GM12878 (cell line): ENCODE measurements at regions of chr3 and their contacts with region 1.

Region 1: DNA sequence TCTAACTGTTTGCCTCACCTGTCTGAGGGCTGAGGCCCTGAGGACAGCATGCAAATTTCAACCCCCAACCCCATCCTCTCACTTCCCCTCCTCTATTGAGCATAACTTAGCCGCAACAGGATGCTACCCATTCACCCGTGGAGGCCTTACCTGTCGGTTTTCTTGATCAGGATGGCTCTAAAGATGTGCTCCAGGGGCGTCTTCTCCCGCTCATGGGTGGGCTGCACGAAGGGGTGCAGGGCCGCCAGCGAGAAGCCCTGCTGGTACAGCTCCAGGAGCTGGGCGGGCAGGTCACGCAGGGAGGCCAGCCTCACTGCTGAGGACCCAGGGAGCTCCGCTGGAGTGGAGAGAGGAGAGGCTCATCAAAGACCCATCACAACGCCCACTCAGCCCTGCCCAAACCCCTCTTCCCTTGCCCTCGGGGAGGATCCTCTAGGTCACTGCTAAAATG is 79.8 kb downstream of the RFTN1 start:
- DNase-seq: peak; percentile 74
- ATAC-seq: peak; percentile 89
- H3K4me3 ChIP-seq: no peak overlapping the region; the same call in 1 of the 2 replicates
- H3K27ac ChIP-seq: peak overlapping the region; percentile 59
- H3K4me1 ChIP-seq: peaks cover 39% of the 10 kb centered on the region
- H3K27me3 ChIP-seq: no peaks in the 10 kb centered on the region
- CTCF ChIP-seq: no peak
- EP300 ChIP-seq: peak; percentile 80 to 95
- POLR2A ChIP-seq: no peak
- RAD21 ChIP-seq: no peak; the same call in 1 of the 2 replicates

Region 2: DNA sequence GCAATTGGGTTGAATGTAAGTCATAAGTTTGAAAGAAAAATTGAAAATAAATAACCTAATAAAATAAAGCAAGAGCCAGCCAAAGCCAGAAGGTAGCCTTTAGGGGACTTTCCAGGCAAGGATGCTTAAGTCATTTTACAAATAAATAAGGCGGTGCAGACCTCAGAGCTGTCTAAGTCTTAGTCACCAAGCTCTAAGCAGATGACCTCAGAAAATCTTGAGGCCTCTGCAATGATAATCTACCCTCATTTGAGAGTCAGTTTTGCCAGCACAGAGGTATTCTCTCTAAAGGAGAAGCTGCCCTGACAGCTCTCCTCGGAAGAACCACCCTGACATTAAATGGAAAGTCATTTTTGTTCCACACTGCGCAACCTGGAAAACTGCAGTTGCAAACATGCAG is 54.8 kb before region 1 on chr3:
- CTCF ChIA-PET with region 1: interaction called, 3 read pairs
- POLR2A ChIA-PET with region 1: interaction called, 9 read pairs
- RAD21 ChIA-PET with region 1: interaction called, 19 read pairs
- SMC1A ChIA-PET with region 1: interaction called, 20 read pairs
- in situ Hi-C with region 1: no loop called
- intact Hi-C with region 1: no loop called
- DNase-seq: no peak
- ATAC-seq: peak; percentile 70
- H3K4me3 ChIP-seq: no peak overlapping the region
- H3K27ac ChIP-seq: peak overlapping the region; percentile 88
- H3K4me1 ChIP-seq: peaks cover 93% of the 10 kb centered on the region
- H3K27me3 ChIP-seq: no peaks in the 10 kb centered on the region
- CTCF ChIP-seq: no peak
- EP300 ChIP-seq: peak in 1 of 2 experiments; percentile 82; a peak in 2 of 4 replicates
- POLR2A ChIP-seq: 0 out of 2 replicates have a peak, but pooled peaks have one; percentile 34
- RAD21 ChIP-seq: no peak

Region 3: DNA sequence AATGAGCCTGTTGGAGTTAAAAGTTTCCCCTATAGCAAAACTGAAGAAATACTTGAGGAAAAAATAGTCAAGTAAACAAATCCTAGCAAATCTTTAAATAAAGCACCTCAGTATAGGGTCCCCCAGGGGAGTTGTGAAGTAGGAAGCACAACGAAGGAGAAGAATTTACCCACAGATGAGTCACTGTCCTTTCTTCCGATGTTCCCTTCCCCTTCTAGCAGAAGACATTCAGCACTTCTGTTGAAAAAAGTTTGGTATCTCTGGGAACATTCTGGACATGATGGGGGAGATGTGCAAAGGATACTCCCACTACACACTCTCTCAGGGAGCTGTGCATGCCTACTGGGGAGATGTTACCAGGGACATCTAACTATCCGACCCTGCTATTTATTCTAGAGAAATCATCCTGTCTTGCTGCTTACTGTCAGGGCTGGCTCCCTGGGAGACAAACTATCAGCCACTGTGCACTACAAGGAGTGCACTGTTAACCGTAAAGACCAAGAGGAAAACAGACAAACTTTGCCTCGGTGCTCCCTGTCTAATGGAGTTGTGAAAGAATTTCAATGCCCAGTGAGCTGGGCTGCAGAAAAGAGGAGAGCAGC is 14.0 kb before region 1 on chr3:
- CTCF ChIA-PET with region 1: interaction called, 7 read pairs
- POLR2A ChIA-PET with region 1: interaction called, 20 read pairs
- RAD21 ChIA-PET with region 1: interaction called, 26 read pairs
- SMC1A ChIA-PET with region 1: interaction called, 54 read pairs
- in situ Hi-C with region 1: no loop called
- intact Hi-C with region 1: no loop called
- DNase-seq: no peak
- ATAC-seq: peak; percentile 4
- H3K4me3 ChIP-seq: no peak overlapping the region
- H3K27ac ChIP-seq: peak overlapping the region; percentile 46; the same call in 1 of the 2 replicates
- H3K4me1 ChIP-seq: peaks cover 24% of the 10 kb centered on the region
- H3K27me3 ChIP-seq: no peaks in the 10 kb centered on the region
- CTCF ChIP-seq: no peak
- EP300 ChIP-seq: no peak
- POLR2A ChIP-seq: no peak
- RAD21 ChIP-seq: no peak

Region 4: DNA sequence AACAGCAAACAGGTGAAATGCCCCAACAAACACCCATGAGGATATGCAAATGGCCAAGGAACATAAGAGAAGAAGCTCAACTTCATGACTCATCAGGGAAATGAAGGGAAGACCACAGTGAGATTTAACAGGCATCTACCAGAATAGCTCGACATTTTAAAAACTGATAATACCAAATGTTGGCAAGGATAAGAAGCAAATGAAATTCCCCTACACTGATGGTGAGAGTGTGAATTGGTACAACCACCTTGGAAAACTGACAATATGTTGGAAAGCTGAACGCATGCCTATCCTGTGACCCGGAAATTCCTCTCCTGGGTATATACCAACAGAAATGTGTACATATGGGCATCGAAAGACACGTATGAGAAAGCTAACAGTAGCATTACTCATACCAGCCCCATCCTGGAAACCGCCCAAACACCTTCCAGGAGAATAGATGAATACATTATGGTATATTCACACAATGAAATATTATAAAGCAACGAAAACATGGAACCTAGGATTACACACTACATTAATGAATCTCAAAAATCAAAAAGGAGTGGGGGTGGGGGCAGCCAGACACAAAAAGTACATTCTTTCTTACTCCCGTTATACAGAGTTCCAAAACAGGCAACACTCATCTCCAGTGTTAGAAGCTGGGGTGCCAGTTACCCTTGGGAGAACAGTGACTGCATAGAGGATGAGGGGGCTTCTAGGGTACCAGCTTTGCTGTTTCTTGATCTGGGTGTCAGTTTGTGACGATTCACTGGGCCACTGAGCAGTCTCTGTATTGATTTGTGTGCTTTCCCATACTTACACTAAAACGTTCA is 62.9 kb after region 1 on chr3:
- CTCF ChIA-PET with region 1: no interaction called
- POLR2A ChIA-PET with region 1: interaction called, 5 read pairs
- RAD21 ChIA-PET with region 1: interaction called, 10 read pairs
- SMC1A ChIA-PET with region 1: interaction called, 175 read pairs
- in situ Hi-C with region 1: no loop called
- intact Hi-C with region 1: no loop called
- DNase-seq: peak; percentile 60
- ATAC-seq: peak; percentile 73
- H3K4me3 ChIP-seq: no peak overlapping the region
- H3K27ac ChIP-seq: peak overlapping the region; percentile 29; the same call in 1 of the 2 replicates
- H3K4me1 ChIP-seq: peaks cover 48% of the 10 kb centered on the region
- H3K27me3 ChIP-seq: no peaks in the 10 kb centered on the region
- CTCF ChIP-seq: no peak
- EP300 ChIP-seq: no peak
- POLR2A ChIP-seq: no peak
- RAD21 ChIP-seq: no peak

Region 5: DNA sequence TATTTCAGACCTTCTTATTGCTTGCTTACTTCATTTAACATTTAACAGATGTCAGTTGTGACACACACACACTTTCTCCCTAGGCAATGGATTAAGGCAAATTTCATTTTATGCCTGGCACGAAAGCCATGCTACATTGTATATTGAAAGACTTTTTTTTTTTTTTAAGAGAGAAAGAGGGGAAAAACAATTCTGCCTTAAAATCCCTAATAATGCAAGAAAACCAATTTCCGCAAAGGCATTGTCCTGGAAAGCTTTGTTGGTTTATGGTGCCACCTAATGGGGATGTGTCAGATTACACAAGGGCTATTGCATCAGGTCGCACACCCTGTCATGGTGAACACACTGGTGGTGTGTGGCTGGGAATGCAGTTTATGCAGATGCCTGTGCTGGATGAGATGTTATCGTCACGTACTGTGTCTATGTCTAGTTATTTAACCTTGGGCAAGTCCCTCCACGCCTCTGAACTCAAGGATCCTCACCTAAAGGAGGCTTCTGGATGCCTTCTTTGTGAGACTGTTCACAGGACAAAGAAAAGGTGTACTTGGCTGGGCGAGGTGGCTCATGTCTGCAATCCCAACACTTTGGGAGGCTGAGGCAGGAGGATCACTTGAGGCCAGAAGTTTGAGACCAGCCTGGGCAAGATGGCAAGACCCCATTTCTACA is 117.1 kb after region 1 on chr3:
- CTCF ChIA-PET with region 1: interaction called, 4 read pairs
- POLR2A ChIA-PET with region 1: interaction called, 4 read pairs
- RAD21 ChIA-PET with region 1: interaction called, 3 read pairs
- SMC1A ChIA-PET with region 1: interaction called, 5 read pairs
- in situ Hi-C with region 1: no loop called
- intact Hi-C with region 1: loop called (anchors 5 kb)
- DNase-seq: peak; percentile 81
- ATAC-seq: peak; percentile 98
- H3K4me3 ChIP-seq: no peak overlapping the region
- H3K27ac ChIP-seq: 0 out of 2 replicates have a peak overlapping the region, but pooled peaks have one; percentile 9
- H3K4me1 ChIP-seq: peaks cover 13% of the 10 kb centered on the region
- H3K27me3 ChIP-seq: no peaks in the 10 kb centered on the region
- CTCF ChIP-seq: peak; percentile 83 to 94 (median 90)
- EP300 ChIP-seq: no peak
- POLR2A ChIP-seq: peak; percentile 25; the same call in 1 of the 2 replicates
- RAD21 ChIP-seq: peak; percentile 100

Region 6: DNA sequence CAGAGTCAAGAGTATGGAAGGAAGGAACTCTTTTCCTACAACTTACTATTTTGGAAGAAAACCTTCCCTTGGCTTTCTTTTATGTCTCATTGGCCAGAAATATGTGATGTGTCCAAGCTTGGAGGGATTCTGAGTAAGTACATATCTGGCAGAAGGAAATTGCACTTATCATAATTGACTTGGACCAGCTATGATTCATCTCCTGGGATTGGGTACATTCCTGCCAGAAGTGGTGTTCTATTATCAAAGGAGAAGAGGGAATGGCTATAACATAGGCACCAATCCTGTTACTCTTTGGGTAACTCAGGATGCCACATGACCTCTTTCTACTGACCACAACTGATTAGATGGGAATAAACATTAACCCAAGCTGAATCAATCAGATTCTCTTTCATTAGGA is 185.0 kb after region 1 on chr3:
- CTCF ChIA-PET with region 1: no interaction called
- POLR2A ChIA-PET with region 1: no interaction called
- RAD21 ChIA-PET with region 1: no interaction called
- SMC1A ChIA-PET with region 1: no interaction called
- in situ Hi-C with region 1: no loop called
- intact Hi-C with region 1: no loop called
- DNase-seq: no peak
- ATAC-seq: no peak
- H3K4me3 ChIP-seq: no peak overlapping the region
- H3K27ac ChIP-seq: no peak overlapping the region
- H3K4me1 ChIP-seq: no peaks in the 10 kb centered on the region
- H3K27me3 ChIP-seq: no peaks in the 10 kb centered on the region
- CTCF ChIP-seq: no peak
- EP300 ChIP-seq: no peak
- POLR2A ChIP-seq: no peak
- RAD21 ChIP-seq: no peak